Posterior cingulate gyrus (tissue), 11 donors: ENCODE measurements at regions of chr2 and their contacts with region 1.

Region 1: DNA sequence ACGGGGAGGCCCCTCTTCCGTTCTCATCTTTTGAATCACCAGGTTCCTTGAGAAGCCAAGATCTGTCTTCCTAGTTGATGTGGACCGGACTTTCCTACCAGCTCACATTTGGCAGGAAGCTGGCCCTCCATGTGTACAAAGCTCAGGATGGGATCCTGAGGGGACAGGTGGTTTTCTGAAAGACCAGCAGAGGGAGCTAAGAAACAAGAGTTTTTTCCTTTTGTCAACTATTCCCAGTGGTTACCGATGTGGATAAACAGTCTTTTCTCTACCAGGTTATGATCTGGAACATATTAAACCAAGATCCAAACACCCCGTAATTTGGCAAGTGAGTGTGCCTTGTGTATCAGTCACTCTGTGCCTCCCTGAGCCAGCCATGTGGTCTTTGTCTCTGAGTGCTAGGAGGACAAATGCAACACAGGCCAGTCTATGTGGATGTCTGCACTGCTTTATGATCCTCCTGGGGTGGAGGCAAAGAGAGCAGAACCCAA is 25.1 kb upstream of the ARHGAP25 start:
- DNase-seq: no peak

Region 2: GRCh38 chr2:68909793-68910674 is 200.6 kb after region 1 on chr2:
- intact Hi-C with region 1: loop called (anchors 5 kb)
- DNase-seq: peak in 6 of 10 donors; percentile 43 to 90 (median 64)

Region 3: GRCh38 chr2:68925295-68925896 is 215.9 kb after region 1 on chr2:
- intact Hi-C with region 1: loop called (anchors 5 kb)
- DNase-seq: peak in 1 of 10 donors; percentile 23